ENCODE measurements at regions of chr5 and their contacts with region 1.

Region 1: DNA sequence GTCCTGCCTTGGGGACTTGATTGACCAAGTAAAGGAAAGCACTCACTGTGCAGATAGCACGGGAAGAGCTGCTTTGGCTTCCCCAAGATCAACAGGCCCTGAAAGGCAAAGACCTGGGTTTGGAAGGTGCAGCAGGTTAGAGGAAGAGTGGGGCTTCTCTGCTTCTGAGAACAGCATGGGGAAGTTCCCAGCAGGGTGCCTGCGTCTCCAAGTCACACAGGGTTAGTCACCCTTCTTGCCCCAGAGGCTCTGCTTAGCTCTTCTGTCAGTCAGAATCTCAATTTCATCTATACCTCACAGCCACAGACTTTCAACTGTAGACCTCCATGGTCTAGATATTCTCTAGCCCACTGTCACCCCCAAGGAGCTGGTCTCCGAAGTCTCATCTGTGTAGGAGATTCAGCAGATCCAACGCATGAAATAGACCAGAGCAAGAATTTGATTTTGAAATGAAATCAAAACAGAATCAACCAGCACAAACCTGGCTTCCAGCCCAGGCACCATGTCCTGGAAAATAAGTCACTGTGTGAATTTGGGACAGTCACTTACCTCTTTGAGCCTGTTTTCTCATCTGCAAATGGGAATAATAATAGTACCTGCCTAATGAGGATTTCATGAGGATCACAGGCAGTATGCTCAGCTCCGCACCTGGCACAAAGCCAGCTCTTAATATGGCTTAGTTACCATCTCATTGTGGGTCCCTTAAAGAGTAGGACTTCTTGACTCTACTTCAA is 64.0 kb downstream of the SFXN1 start:
- DNase-seq: no peak
- ATAC-seq: no peak
- H3K4me3 ChIP-seq: no peak overlapping the region
- H3K27ac ChIP-seq: no peak overlapping the region
- H3K4me1 ChIP-seq: peaks cover 4% of the 10 kb centered on the region
- H3K27me3 ChIP-seq: no peaks in the 10 kb centered on the region

Region 2: DNA sequence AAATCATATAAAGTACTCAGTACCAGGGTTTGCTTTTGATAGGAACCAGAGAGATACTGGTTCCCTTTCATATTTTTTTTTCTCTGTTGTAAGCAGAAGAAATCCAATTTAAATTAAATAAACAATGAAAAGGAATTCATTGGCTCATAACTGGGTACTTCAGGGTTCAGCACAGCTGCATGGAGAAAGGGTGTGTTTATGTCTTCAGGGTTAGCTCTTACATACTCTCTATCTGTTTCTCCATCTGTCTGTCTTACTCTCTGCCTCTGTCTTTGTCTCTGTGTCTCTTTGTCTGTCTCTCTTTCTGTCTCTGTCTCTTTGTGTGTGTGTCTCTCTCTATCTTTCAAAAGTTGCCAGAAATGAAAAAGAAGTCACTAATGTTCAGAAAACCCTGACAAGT is 472.1 kb before region 1 on chr5:
- intact Hi-C with region 1: no loop called
- DNase-seq: no peak
- ATAC-seq: no peak
- H3K4me3 ChIP-seq: no peak overlapping the region
- H3K27ac ChIP-seq: no peak overlapping the region
- H3K4me1 ChIP-seq: no peaks in the 10 kb centered on the region
- H3K27me3 ChIP-seq: no peaks in the 10 kb centered on the region

Region 3: DNA sequence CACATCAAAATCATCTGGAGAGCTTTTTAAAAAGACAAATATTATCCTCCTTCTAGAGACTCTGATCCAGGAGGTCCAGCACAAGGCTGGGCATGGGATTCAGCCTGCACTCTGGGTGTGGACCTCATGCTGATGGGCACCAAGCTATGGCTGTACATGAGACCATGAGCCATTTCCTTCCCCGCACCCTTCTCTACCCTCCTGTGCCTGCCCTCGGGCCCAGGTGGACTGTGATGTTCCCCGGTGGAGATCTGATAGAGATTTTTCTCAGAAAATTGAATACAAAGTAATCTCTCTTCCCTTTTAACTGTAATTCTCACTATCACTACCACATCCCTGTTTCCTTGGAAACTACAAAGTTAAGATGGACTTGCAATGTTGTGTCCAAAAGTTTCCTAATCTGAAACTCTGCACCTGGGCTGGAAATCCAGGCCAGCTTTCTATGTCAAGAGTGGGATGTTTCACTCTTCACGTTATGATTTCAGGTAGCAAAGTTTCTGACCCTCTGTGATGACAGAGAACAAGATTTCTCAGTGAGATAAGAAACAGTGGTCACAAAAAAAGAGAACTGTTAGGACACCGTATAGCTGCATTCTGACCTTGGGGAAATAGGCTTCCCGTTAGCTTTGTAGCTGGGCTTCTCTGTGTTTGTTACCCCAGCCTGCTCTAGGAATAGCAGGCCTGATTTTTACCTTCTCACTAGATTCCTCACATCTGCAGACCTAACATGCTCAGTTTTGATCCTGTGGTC is 52.5 kb before region 1 on chr5:
- intact Hi-C with region 1: no loop called
- DNase-seq: no peak
- ATAC-seq: no peak
- H3K4me3 ChIP-seq: no peak overlapping the region
- H3K27ac ChIP-seq: no peak overlapping the region
- H3K4me1 ChIP-seq: no peaks in the 10 kb centered on the region
- H3K27me3 ChIP-seq: no peaks in the 10 kb centered on the region

Region 4: DNA sequence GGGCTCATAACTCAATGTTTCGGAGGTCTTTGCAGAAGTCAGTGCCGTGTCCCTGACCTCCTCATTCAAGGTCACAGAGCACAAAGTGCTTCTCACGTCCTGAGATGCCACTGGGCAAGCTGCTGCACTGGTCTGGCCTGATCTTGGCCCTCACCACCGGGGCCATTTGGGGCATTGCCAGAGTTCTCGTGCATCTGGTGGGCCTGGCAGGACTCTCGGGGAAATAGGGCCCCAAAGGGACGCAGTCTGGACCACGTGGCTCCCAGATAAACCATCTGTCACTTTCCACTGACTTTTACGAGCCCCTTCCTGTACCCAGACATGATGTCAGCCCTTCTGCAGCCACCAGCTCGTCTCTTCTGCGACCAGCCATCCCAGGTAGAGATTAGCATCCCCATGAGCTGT is 170.3 kb after region 1 on chr5:
- intact Hi-C with region 1: loop called in 2 of 4 experiments (anchors 5 kb)
- DNase-seq: peak in 1 of 3 donors; percentile 22
- ATAC-seq: no peak
- H3K4me3 ChIP-seq: no peak overlapping the region
- H3K27ac ChIP-seq: no peak overlapping the region
- H3K4me1 ChIP-seq: peaks cover 3% of the 10 kb centered on the region
- H3K27me3 ChIP-seq: no peaks in the 10 kb centered on the region

Measured in right cardiac atrium (tissue), 5 donors.